OCI-LY7 (cell line): ENCODE measurements at regions of chr20 and their contacts with region 1.

Region 1: GRCh38 chr20:51385646-51386530 is 156.6 kb downstream of the NFATC2 start:
- DNase-seq: peak; percentile 74
- H3K4me3 ChIP-seq: peak overlapping the region; percentile 6
- H3K27ac ChIP-seq: peak overlapping the region; percentile 95
- H3K4me1 ChIP-seq: peaks cover 100% of the 10 kb centered on the region
- CTCF ChIP-seq: peak; percentile 82

Region 2: GRCh38 chr20:51404298-51405060 is 18.6 kb after region 1 on chr20:
- CTCF ChIA-PET with region 1: interaction called, 11 read pairs
- POLR2A ChIA-PET with region 1: interaction called, 32 read pairs
- intact Hi-C with region 1: loop called (anchors 1 kb)
- DNase-seq: peak; percentile 88
- H3K4me3 ChIP-seq: peak overlapping the region; percentile 15
- H3K27ac ChIP-seq: peak overlapping the region; percentile 89
- H3K4me1 ChIP-seq: peaks cover 67% of the 10 kb centered on the region
- CTCF ChIP-seq: no peak

Region 3: DNA sequence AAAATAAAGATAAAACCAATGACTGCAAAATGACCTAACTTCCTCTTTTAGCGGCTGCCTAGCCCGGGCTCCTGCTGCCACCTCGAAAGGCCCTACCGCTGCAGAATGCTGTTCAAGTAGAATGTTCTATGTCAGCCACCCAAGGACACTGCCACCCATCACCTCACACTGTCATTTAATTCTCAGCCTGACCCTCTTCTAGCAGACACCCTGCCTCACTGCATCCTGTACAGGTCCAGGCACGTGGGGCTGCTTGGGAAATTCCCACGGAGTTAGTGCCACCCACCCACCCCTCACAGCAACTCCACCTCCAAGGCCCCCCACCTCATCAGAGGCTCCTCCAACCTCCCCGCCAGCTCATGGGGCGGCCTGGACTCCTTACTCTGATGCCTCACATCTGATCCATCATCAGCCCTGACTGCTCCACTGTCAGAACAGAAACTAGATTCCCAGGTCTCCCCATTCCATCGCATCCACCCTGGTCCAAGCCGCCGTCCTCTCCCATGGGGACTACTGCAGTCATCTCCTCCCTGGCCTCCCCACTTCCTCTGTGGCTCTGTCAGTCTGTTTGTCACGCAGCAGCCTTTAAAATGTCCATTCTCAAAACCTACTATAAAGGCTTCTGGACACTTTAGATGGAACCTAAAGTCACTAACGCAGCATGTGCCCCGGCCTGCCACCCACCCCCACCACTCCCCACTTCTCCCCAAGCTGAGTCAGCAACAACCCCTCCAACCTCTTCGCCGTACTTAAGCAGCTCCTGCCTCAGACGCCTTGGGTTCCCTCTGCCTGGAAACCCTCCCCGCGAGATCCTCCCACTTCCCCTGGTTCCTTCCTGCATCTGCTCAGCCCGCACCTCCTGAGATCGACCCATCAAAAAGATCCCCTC is 139.6 kb after region 1 on chr20:
- CTCF ChIA-PET with region 1: no interaction called
- POLR2A ChIA-PET with region 1: interaction called, 3 read pairs
- intact Hi-C with region 1: loop called (anchors 5 kb)
- DNase-seq: peak; percentile 43
- H3K4me3 ChIP-seq: peak overlapping the region; percentile 56
- H3K27ac ChIP-seq: peak overlapping the region; percentile 61
- H3K4me1 ChIP-seq: peaks cover 59% of the 10 kb centered on the region
- CTCF ChIP-seq: no peak

Region 4: GRCh38 chr20:51541189-51542032 is 155.5 kb after region 1 on chr20:
- CTCF ChIA-PET with region 1: no interaction called
- POLR2A ChIA-PET with region 1: interaction called, 4 read pairs
- intact Hi-C with region 1: loop called (anchors 1 kb)
- DNase-seq: peak; percentile 72
- H3K4me3 ChIP-seq: peak overlapping the region; percentile 79
- H3K27ac ChIP-seq: peak overlapping the region; percentile 77
- H3K4me1 ChIP-seq: peaks cover 58% of the 10 kb centered on the region
- CTCF ChIP-seq: no peak

Region 5: DNA sequence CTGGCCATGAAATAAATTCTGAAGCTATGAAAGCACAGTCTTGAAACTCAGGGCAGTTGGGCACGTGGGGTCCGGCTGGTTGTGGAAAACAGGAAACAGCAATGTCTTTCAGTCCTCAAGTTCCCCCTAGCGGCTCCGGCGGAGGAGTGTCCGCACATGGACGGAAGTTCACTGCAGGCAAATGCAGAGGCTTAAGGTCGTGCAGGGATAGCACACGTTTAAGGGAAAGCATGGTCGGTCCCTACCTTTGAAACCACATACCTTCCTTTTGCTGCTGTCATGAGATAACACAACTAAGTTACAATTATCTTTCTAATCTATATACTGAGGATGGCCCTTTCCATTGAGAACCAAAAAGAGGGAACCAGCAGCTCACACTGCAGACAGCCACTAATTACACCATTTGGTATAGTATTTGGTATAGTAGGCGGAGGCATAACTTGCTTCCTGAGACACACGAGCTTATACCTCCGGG is 209.2 kb after region 1 on chr20:
- CTCF ChIA-PET with region 1: interaction called, 10 read pairs
- POLR2A ChIA-PET with region 1: interaction called, 9 read pairs
- intact Hi-C with region 1: loop called (anchors 1 kb)
- DNase-seq: peak; percentile 96
- H3K4me3 ChIP-seq: peak overlapping the region; percentile 21
- H3K27ac ChIP-seq: peak overlapping the region; percentile 67
- H3K4me1 ChIP-seq: peaks cover 46% of the 10 kb centered on the region
- CTCF ChIP-seq: peak; percentile 94

Region 6: DNA sequence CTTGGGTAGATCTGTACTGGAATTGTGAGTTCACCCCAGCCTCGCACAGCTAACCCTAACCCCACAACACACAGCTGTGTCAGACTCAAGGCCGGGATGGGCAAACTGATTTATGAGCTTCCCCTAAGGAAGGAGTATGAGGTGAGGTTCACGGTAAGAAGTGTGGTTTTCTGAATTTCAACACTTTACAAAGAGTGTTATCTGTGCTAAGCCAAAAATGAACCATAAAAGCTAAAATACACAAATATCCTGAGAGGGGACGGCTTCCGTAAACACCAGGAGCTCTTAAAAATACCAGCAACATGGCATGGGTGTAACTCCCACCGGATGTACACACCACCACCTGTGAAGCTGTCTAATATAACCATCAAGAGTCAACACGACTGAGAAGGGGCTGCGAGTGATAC is 281.1 kb after region 1 on chr20:
- CTCF ChIA-PET with region 1: no interaction called
- POLR2A ChIA-PET with region 1: interaction called, 4 read pairs
- intact Hi-C with region 1: loop called (anchors 5 kb)
- DNase-seq: peak; percentile 58
- H3K4me3 ChIP-seq: peak overlapping the region; percentile 11
- H3K27ac ChIP-seq: peak overlapping the region; percentile 88
- H3K4me1 ChIP-seq: peaks cover 65% of the 10 kb centered on the region
- CTCF ChIP-seq: no peak